Kidney (tissue), 22 donors: ENCODE measurements at regions of chr19 and their contacts with region 1.

Region 1: DNA sequence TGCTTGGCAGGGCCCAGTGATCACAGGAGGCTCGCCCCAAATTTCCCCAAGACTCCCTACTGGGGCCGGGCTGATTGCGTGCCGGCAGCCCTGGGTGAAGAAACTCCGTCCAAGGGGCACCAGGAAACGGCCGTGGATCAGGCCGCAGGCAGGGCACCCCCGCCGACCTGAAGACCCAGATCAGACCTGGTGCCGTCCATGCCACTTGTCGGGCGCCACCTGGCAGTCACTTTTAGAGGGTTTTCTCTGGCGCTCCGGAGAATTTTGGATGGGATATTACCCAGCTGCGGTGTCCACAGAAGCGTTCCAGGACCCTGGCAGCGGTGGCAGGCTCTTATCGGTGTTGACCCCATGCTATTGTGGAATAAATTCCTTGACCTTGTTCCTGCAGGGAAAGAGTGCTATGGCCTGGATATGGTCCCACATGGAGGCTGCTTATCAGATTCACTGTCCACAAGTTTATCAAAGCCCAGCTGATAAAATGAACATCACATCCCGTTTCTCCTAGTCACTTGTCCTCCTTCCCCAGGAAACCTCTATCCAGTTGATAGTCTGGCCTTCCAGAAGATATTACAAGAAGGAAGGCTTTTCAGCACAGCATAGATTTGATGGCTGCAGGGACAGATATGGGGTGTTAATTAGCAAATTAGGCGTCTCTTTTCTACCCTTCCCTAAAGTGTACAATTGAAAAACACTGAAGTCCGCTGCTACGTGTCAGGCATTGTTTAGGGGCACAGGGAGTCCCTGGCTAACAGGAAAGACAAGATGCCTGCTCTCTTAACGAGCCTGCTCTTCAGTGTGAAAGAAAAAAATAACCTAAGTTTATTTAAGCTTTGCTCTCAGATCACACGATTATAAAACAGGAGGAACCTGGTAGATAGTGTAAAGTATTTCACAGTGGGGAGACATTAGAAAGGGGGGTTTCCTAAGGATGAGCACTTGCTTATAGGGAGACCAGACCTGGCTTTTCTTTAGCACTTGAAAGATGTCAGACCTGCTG is 38.4 kb downstream of the IGFL2 start:
- DNase-seq: no peak
- H3K4me3 ChIP-seq: no peak overlapping the region
- H3K27ac ChIP-seq: no peak overlapping the region
- H3K4me1 ChIP-seq: no peaks in the 10 kb centered on the region
- H3K27me3 ChIP-seq: no peaks in the 10 kb centered on the region
- CTCF ChIP-seq: no peak

Region 2: DNA sequence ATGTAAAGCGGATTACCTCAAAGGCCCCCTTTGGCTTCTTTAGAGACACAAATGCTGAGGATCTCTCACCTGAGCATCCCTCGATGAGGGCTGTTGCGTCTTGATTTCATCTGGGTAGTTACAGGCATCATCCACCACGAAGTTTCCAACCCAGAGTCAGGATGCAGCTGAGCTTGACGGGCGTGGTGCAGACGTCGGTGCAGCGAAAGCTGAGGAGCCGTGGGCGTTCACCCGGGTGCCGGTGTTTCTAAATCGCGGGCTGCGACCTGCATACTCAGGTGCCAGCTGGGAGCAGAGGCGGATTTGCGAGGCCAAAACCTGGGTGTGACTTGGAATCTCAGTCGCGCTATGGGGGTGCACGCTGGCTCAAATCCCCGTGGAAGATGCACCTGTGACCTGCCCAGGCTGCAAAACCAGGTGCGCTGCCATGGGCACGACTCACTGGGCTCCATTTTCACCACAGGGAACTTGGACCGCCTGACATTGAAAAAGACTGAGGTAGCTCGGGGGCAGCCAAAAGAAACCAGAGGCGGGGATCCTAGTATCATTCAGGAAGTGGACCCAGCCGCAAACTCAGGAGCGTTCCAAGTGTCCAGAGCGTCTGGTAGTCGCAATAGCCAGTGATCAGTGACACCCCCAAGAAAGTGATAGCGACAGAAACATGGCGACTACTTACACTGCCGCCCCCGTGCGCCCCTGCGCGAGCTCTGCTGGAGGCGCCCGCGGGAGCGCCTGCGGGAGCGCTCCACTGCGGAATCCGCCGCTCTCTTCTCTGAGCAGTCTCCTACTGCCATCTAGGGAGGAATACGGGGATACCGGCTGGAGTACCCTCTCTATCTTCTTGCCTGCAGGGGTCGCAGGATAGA is 109.2 kb before region 1 on chr19:
- intact Hi-C with region 1: loop called (anchors 5 kb)
- DNase-seq: peak; percentile 66 to 91 (median 84)
- H3K4me3 ChIP-seq: no peak overlapping the region
- H3K27ac ChIP-seq: no peak overlapping the region
- H3K4me1 ChIP-seq: peaks cover 0 to 3% (median 0%) of the 10 kb centered on the region in 3 donors
- H3K27me3 ChIP-seq: peaks cover 31% of the 10 kb centered on the region
- CTCF ChIP-seq: peak; percentile 71